OCI-LY7 (cell line): ENCODE measurements at regions of chr3 and their contacts with region 1.

Region 1: GRCh38 chr3:52536369-52537164 is at the start of gene UQCC5:
- DNase-seq: peak; percentile 99
- H3K4me3 ChIP-seq: peak within 1 kb of the TSS; percentile 90
- H3K27ac ChIP-seq: peak within 1 kb of the TSS; percentile 51
- H3K4me1 ChIP-seq: peaks cover 56% of the 10 kb centered on the region
- CTCF ChIP-seq: no peak; the same call in 1 of the 2 replicates
- total RNA-seq, gene UQCC5: 12.0 and 18.4 TPM in 2 replicates

Region 2: GRCh38 chr3:52388933-52389332 is 147.6 kb before region 1 on chr3:
- CTCF ChIA-PET with region 1: no interaction called
- POLR2A ChIA-PET with region 1: no interaction called
- intact Hi-C with region 1: no loop called
- DNase-seq: peak; percentile 41
- H3K4me3 ChIP-seq: no peak overlapping the region
- H3K27ac ChIP-seq: no peak overlapping the region
- H3K4me1 ChIP-seq: no peaks in the 10 kb centered on the region
- CTCF ChIP-seq: peak; percentile 53

Region 3: GRCh38 chr3:52455283-52456168 is 81.0 kb before region 1 on chr3 and contains the start of gene NISCH:
- CTCF ChIA-PET with region 1: no interaction called
- POLR2A ChIA-PET with region 1: interaction called, 3 read pairs
- intact Hi-C with region 1: loop called (anchors 5 kb)
- DNase-seq: peak; percentile 93
- H3K4me3 ChIP-seq: peak within 1 kb of the TSS; percentile 99
- H3K27ac ChIP-seq: peak within 1 kb of the TSS; percentile 52
- H3K4me1 ChIP-seq: peaks cover 31% of the 10 kb centered on the region
- CTCF ChIP-seq: no peak
- total RNA-seq, gene NISCH: 53.8 and 60.5 TPM in 2 replicates

Region 4: GRCh38 chr3:52471371-52472238 is 65.0 kb before region 1 on chr3:
- CTCF ChIA-PET with region 1: no interaction called
- POLR2A ChIA-PET with region 1: no interaction called
- intact Hi-C with region 1: loop called (anchors 5 kb)
- DNase-seq: peak; percentile 52
- H3K4me3 ChIP-seq: no peak overlapping the region
- H3K27ac ChIP-seq: no peak overlapping the region
- H3K4me1 ChIP-seq: no peaks in the 10 kb centered on the region
- CTCF ChIP-seq: peak; percentile 80

Region 5: DNA sequence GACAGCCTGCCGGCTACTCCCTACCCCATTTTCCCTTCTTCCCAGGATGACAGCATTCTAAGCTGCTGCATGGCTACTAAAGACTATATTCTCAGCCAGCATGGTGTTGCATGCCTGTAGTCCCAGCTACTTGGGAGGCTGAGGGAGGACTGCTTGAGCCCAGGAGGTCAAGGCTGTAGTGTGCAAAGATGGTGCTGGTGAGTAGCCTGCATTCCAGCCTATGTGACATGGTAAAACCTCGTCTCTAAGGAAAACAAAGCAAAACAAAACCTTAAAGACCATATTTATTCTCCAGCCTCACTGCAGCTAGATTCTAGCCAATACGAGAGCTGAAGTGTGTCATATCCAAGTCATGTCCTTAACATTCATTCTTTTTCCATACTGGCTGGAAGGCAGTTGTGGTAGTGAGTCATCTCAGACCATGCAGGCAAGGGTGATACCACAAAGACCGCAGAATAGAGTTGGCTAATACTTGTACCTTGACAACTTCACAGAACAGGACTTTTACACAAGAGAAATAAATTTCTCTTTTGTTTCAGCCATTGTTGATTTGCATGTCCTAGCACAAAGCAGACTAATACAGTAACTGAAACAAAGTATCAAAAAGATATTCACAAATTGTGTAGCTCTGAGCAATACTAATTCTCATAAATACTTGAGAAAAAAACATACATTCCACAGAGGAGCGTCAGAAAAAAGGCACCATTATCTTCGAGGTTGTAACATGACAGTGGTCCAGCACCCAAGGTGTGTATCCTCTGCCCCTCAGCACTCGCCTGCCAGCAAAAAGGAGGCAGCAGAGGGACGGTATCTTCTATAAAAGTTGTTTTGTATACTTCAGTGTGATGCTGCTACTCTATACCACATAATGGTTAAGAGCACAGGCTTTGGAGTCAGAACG is 134.3 kb after region 1 on chr3:
- CTCF ChIA-PET with region 1: no interaction called
- POLR2A ChIA-PET with region 1: no interaction called
- intact Hi-C with region 1: no loop called
- DNase-seq: no peak
- H3K4me3 ChIP-seq: no peak overlapping the region
- H3K27ac ChIP-seq: no peak overlapping the region
- H3K4me1 ChIP-seq: no peaks in the 10 kb centered on the region
- CTCF ChIP-seq: no peak